HEK293 (cell line): ENCODE measurements at regions of chr11 and their contacts with region 1.

Region 1: DNA sequence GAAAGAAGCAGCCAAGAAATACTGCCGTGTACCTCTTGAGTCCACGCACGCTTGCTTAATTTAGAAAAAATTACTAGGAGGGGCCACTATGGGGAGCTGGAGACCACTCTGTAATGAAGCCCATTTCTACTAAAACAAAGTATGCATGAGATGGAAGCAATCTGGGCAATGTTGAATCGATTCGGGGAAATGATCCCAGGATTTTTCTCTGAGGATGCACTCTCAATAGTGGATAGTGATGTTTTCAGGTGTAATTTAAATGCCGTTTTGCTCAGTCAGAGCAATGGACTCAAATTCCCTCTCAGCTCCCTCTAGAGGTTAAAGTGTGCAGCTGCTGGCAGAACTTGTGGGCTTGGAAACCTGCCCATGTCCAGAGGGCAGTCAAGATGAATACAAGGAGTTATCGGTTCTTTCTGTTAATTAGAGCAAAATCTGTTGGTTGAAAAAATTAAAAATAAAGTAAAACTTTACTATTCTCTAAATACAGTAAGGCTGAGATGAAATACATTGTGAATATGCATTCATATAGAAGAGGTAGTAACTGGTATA is 64.1 kb downstream of the ME3 start:
- H3K4me3 ChIP-seq: no peak overlapping the region
- H3K27ac ChIP-seq: no peak overlapping the region
- H3K4me1 ChIP-seq: peaks cover 4% of the 10 kb centered on the region; the same call in 1 of the 2 replicates
- CTCF ChIP-seq: peak; percentile 77

Region 2: GRCh38 chr11:85805387-85805786 is 802.9 kb before region 1 on chr11:
- CTCF ChIA-PET with region 1: no interaction called
- POLR2A ChIA-PET with region 1: no interaction called
- H3K4me3 ChIP-seq: no peak overlapping the region
- H3K27ac ChIP-seq: no peak overlapping the region
- H3K4me1 ChIP-seq: no peaks in the 10 kb centered on the region
- CTCF ChIP-seq: no peak

Region 3: GRCh38 chr11:86537541-86538222 is 70.6 kb before region 1 on chr11:
- CTCF ChIA-PET with region 1: interaction called, 10 read pairs
- POLR2A ChIA-PET with region 1: no interaction called
- H3K4me3 ChIP-seq: no peak overlapping the region
- H3K27ac ChIP-seq: no peak overlapping the region
- H3K4me1 ChIP-seq: no peaks in the 10 kb centered on the region
- CTCF ChIP-seq: peak; percentile 29; the same call in 1 of the 2 replicates

Region 4: DNA sequence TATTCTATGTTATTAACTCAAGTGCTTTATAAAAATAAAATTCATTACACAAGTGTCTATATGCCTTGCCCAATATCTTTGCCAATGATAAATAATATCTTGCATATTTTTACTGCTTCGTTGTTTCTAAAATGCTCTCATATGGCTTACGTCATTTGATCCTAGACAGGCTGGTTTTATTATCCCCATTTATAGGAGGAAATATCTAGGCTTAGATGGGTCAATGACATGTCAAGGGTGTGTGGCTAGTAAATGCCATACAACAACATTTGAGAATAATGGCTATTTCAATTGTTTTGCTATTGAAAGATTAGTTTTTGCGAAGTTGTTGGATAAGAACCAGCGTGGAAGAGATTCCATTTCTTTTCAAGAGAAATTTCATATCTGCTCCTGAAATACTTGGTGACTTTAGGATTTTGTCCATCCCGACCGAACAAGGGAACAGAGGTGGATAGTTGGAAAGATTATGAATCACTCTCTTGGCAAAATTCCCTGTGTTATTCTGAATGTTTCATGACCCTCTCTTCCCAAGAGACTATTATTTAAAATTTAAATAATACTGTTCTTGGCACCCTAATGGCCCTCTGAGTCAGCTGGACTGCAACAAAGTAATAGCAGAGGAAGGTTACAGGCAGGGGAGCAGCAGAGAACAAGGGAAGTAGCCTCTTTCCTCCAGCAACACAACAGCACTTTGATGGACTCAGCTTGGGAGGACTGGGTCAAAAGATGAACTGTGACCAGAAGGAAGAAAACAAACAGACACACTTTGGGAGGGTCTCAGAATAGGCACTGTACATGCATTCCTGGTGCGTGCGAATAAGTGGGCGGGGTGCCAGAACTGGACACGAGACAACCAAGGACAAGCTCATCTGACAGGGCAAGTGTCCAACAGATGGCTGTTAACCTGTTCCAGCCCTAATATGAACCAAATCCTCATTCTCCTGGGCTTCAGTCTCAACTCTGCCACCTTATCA is 30.4 kb before region 1 on chr11:
- CTCF ChIA-PET with region 1: interaction called, 24 read pairs
- POLR2A ChIA-PET with region 1: no interaction called
- H3K4me3 ChIP-seq: no peak overlapping the region
- H3K27ac ChIP-seq: peak overlapping the region; percentile 54
- H3K4me1 ChIP-seq: peaks cover 13% of the 10 kb centered on the region
- CTCF ChIP-seq: no peak

Region 5: DNA sequence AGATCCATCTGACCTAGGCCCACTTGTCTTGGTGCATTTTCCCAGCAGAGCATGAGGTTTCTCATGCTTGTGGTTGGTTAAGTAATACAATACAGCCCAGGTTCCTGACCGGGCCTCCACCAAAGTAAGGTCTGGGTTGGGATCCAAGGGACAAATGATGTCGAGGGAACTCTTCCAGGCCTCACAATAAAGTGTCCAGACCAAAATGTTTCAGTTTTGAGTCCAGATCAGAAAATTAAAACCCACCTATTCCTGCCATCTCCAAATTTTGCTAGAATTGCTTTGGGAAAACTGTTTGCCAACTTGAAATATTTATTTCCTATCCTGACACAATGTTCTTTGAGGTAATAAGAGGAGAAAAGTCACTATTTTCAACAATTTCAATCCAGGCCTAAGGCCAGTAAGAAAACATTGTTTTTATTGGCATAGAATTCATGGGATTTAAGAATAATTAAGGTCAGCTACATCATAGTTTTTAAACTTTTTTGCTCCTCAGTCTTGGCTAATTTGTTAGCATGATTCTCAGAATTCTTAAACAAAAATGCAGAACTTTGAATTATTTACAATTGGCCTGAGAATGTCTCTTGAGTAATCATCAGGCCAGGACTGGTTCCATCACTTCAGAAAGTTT is 12.7 kb after region 1 on chr11:
- CTCF ChIA-PET with region 1: interaction called, 14 read pairs
- POLR2A ChIA-PET with region 1: no interaction called
- H3K4me3 ChIP-seq: no peak overlapping the region
- H3K27ac ChIP-seq: no peak overlapping the region
- H3K4me1 ChIP-seq: no peaks in the 10 kb centered on the region
- CTCF ChIP-seq: no peak

Region 6: GRCh38 chr11:86675017-86675416 is 66.7 kb after region 1 on chr11:
- CTCF ChIA-PET with region 1: interaction called, 10 read pairs
- POLR2A ChIA-PET with region 1: no interaction called
- H3K4me3 ChIP-seq: no peak overlapping the region
- H3K27ac ChIP-seq: no peak overlapping the region
- H3K4me1 ChIP-seq: peaks cover 9% of the 10 kb centered on the region
- CTCF ChIP-seq: no peak

Region 7: GRCh38 chr11:86811637-86812321 is 203.5 kb after region 1 on chr11:
- CTCF ChIA-PET with region 1: interaction called, 18 read pairs
- POLR2A ChIA-PET with region 1: no interaction called
- H3K4me3 ChIP-seq: no peak overlapping the region
- H3K27ac ChIP-seq: no peak overlapping the region
- H3K4me1 ChIP-seq: peaks cover 3% of the 10 kb centered on the region; the same call in 1 of the 2 replicates
- CTCF ChIP-seq: no peak